ENCODE measurements at regions of chr21 and their contacts with region 1.

Region 1: GRCh38 chr21:27362249-27362648 is 395.4 kb upstream of the ADAMTS5 start:
- DNase-seq: peak; percentile 11
- H3K4me3 ChIP-seq: no peak overlapping the region
- H3K27ac ChIP-seq: no peak overlapping the region
- H3K4me1 ChIP-seq: peaks cover 9% of the 10 kb centered on the region
- H3K27me3 ChIP-seq: no peaks in the 10 kb centered on the region
- CTCF ChIP-seq: peak; percentile 30 to 44

Region 2: DNA sequence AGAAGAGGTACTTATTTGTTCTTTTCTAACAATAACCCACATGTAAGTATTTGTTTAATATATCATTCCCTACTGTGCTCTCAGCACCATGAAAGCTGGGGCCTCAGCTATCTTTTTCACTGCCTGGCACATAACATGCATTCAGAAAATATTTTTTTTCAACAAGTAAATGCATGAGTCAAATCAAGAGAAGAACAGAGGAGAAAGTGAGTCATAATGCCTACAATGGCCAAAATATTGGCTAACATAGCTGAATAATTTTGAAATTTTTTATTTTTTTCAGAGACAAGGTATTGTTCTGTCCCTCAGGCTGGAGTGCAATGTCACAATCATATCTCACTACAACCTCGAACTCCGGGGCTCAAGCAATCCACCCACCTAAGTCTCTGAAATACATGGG is 143.2 kb before region 1 on chr21:
- CTCF ChIA-PET with region 1: no interaction called
- dilution Hi-C with region 1: no loop called
- in situ Hi-C with region 1: no loop called
- intact Hi-C with region 1: no loop called
- DNase-seq: peak; percentile 67
- H3K4me3 ChIP-seq: no peak overlapping the region
- H3K27ac ChIP-seq: peak overlapping the region; percentile 27
- H3K4me1 ChIP-seq: peaks cover 5% of the 10 kb centered on the region
- H3K27me3 ChIP-seq: no peaks in the 10 kb centered on the region
- CTCF ChIP-seq: no peak

Region 3: DNA sequence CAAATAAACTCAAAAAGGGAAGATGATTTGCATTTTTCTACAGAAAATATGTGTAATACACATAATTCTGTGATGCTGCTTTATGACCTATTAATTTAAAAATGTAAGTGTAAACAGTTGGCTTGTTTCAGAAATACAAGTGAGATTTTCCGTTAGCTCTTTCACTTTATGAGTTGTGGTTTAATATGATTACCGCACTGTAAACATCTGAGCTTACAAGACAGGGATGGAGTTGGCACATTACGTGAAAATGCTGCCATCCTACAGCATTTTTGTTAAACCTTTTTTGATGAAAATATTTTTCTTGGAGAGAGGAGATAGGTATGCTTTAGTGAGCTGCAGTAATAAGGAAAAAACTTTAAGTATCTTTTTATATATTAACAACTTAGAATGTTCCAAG is 31.5 kb after region 1 on chr21:
- CTCF ChIA-PET with region 1: no interaction called
- dilution Hi-C with region 1: no loop called
- in situ Hi-C with region 1: no loop called
- intact Hi-C with region 1: no loop called
- DNase-seq: no peak
- H3K4me3 ChIP-seq: no peak overlapping the region
- H3K27ac ChIP-seq: no peak overlapping the region
- H3K4me1 ChIP-seq: peaks cover 3% of the 10 kb centered on the region
- H3K27me3 ChIP-seq: no peaks in the 10 kb centered on the region
- CTCF ChIP-seq: no peak

Region 4: DNA sequence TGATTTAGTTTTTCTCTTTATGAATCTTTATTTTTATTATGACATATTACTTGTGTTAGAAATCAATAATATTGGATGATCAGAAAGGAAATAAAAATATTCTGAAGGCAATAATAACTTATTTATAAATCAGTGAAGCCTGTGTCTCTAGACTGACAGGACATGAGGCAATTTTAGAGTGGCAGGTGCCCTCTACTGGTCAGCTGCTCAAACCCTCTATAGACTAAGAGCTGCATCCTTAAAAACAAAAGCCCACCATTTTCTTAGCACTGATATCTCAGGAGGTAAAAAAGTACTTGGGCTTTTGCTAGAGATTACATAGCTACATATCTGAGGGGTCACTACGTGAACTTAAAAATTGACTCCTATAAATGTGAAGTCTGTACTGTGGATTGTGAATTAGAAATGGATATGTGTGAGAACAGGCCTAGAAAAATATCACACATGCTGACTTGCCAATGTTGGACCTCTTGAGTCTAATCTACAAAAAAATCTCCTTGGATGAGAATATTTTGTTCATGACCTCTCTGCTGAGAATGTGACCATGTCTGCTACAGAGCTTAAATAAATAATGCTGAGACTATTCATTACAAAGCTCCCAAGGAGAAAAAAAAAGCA is 202.5 kb after region 1 on chr21:
- CTCF ChIA-PET with region 1: interaction called, 3 read pairs
- dilution Hi-C with region 1: no loop called
- in situ Hi-C with region 1: no loop called
- intact Hi-C with region 1: loop called (anchors 1 kb)
- DNase-seq: peak; percentile 42
- H3K4me3 ChIP-seq: no peak overlapping the region
- H3K27ac ChIP-seq: no peak overlapping the region
- H3K4me1 ChIP-seq: peaks cover 12% of the 10 kb centered on the region
- H3K27me3 ChIP-seq: no peaks in the 10 kb centered on the region
- CTCF ChIP-seq: peak; percentile 62 to 86

Measured in mammary epithelial cell (primary cell).